Right lobe of liver (tissue), 6 donors: ENCODE measurements at regions of chr10 and their contacts with region 1.

Region 1: DNA sequence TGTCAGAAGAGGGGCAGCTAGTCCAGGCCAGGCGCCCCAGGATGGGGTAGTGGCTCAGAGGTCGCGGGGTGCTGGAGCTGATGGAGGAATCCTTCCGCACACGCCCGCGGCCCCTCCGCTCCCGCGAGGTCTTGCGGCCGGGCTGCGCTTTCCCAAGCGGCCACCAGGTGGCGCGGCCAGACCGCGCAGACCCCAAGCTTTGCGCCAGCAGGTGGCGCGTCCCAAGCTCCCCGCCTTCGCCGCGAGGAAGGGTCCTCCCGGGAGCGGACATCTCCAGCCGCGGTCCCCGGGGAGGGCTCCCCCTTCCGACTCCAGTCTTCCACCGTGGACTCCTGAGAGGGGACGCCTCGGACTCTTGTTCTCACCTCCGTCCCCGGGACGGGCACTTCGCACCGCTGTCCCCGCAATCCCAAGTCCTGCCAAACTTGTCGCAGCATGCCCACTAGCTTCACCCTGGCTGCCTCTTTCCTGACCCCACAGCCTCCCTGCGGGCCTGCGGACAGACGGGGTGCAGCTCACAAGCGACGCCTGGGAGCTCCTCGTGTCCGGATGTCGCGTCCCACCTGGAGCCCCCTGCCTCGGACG is 19.4 kb downstream of the KCNK18 start:
- DNase-seq: peak; percentile 74 to 82 (median 80)
- ATAC-seq: peak; percentile 92 to 98 (median 96)
- H3K4me3 ChIP-seq: peak overlapping the region; percentile 43 to 57 (median 47)
- H3K27ac ChIP-seq: no peak overlapping the region
- H3K4me1 ChIP-seq: peaks cover 0 to 12% (median 0%) of the 10 kb centered on the region in 4 donors
- H3K27me3 ChIP-seq: no peaks in the 10 kb centered on the region
- CTCF ChIP-seq: peak; percentile 99 to 100 (median 100)
- POLR2A ChIP-seq: no peak

Region 2: GRCh38 chr10:116985611-116986010 is 231.1 kb before region 1 on chr10:
- intact Hi-C with region 1: no loop called
- DNase-seq: no peak
- ATAC-seq: peak in 1 of 4 donors; percentile 47
- H3K4me3 ChIP-seq: no peak overlapping the region
- H3K27ac ChIP-seq: no peak overlapping the region
- H3K4me1 ChIP-seq: peaks cover 0 to 4% (median 0%) of the 10 kb centered on the region in 4 donors
- H3K27me3 ChIP-seq: no peaks in the 10 kb centered on the region
- CTCF ChIP-seq: no peak
- POLR2A ChIP-seq: no peak

Region 3: DNA sequence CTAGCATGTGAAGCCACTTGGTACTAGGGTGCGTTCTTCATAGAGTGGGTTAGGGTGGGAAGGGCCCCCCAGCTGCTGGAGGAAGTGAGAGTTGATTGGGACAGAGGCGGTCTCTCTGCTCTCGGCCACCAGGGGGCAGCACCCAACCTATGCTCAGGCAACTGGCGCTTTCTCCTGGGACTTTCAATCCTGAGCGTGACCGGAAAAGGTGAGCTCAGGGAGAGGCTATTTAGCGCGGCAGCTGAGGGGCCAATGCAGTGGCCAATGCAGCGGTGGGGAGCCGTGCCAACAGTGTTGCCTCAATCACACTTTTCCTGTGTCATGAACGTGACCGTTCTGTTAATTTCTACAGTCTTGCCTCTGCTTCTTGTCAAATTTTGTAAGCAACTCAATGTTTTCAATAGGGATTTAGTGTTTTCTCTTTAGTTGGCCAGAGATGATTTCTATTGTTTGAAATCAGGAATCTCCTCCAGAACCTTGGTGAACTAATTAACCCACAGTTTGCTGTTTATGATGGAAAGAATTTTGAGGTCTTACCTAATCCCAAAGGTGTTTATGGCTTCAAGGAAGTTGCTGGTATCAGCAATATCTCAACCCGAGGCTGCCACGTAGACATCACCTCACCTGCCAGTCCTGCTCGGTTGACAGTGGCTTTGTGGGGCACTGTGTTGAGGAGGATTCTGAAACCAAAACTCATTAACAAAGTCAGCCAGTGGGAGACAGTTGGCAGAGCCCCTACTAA is 226.4 kb after region 1 on chr10:
- intact Hi-C with region 1: loop called in 1 of 2 experiments (anchors 10 kb)
- DNase-seq: peak; percentile 84 to 89 (median 87)
- ATAC-seq: peak; percentile 97 to 99 (median 98)
- H3K4me3 ChIP-seq: peak overlapping the region in 1 of 3 donors; percentile 26
- H3K27ac ChIP-seq: no peak overlapping the region
- H3K4me1 ChIP-seq: no peaks in the 10 kb centered on the region
- H3K27me3 ChIP-seq: no peaks in the 10 kb centered on the region
- CTCF ChIP-seq: peak; percentile 84 to 98 (median 96)
- POLR2A ChIP-seq: no peak